ENCODE measurements at regions of chr20 and their contacts with region 1.

Region 1: GRCh38 chr20:50146732-50147662 is 6.5 kb downstream of the PEDS1 start:
- DNase-seq: peak; percentile 81
- H3K4me3 Mint-ChIP-seq: peak overlapping the region; percentile 61
- H3K27ac Mint-ChIP-seq: peak overlapping the region; percentile 96
- H3K4me1 Mint-ChIP-seq: peaks cover 65% of the 10 kb centered on the region
- H3K27me3 Mint-ChIP-seq: no peaks in the 10 kb centered on the region
- CTCF ChIP-seq: no peak

Region 2: GRCh38 chr20:49812463-49813304 is 334.3 kb before region 1 on chr20 and contains the start of gene SLC9A8:
- CTCF ChIA-PET with region 1: no interaction called
- POLR2A ChIA-PET with region 1: no interaction called
- intact Hi-C with region 1: no loop called
- DNase-seq: peak; percentile 95
- H3K4me3 Mint-ChIP-seq: peak within 1 kb of the TSS; percentile 87
- H3K27ac Mint-ChIP-seq: peak within 1 kb of the TSS; percentile 71
- H3K4me1 Mint-ChIP-seq: peaks cover 32% of the 10 kb centered on the region
- H3K27me3 Mint-ChIP-seq: no peaks in the 10 kb centered on the region
- CTCF ChIP-seq: no peak
- total RNA-seq, gene SLC9A8: 14.6 and 16.5 TPM in 2 replicates

Region 3: GRCh38 chr20:50133474-50134217 is 13.4 kb before region 1 on chr20:
- CTCF ChIA-PET with region 1: interaction called, 8 read pairs
- POLR2A ChIA-PET with region 1: interaction called, 29 read pairs
- intact Hi-C with region 1: no loop called
- DNase-seq: no peak
- H3K4me3 Mint-ChIP-seq: no peak overlapping the region
- H3K27ac Mint-ChIP-seq: no peak overlapping the region
- H3K4me1 Mint-ChIP-seq: peaks cover 20% of the 10 kb centered on the region
- H3K27me3 Mint-ChIP-seq: no peaks in the 10 kb centered on the region
- CTCF ChIP-seq: no peak

Region 4: GRCh38 chr20:50292324-50293243 is 145.6 kb after region 1 on chr20:
- CTCF ChIA-PET with region 1: no interaction called
- POLR2A ChIA-PET with region 1: no interaction called
- intact Hi-C with region 1: no loop called
- DNase-seq: peak; percentile 94
- H3K4me3 Mint-ChIP-seq: no peak overlapping the region
- H3K27ac Mint-ChIP-seq: peak overlapping the region; percentile 84
- H3K4me1 Mint-ChIP-seq: no peaks in the 10 kb centered on the region
- H3K27me3 Mint-ChIP-seq: no peaks in the 10 kb centered on the region
- CTCF ChIP-seq: no peak